ENCODE measurements at regions of chr14 and their contacts with region 1.

Region 1: GRCh38 chr14:51094901-51095853 is at the start of gene TRIM9:
- DNase-seq: peak; percentile 95
- ATAC-seq: peak; percentile 97
- H3K4me3 ChIP-seq: peak within 1 kb of the TSS; percentile 58 to 83 (median 80)
- H3K4me3 Mint-ChIP-seq: peak within 1 kb of the TSS; percentile 95
- H3K27ac ChIP-seq: no peak within 1 kb of the TSS
- H3K27ac Mint-ChIP-seq: peak within 1 kb of the TSS; percentile 75
- H3K4me1 ChIP-seq: peaks cover 21 to 24% of the 10 kb centered on the region in 2 donors
- H3K4me1 Mint-ChIP-seq: peaks cover 23% of the 10 kb centered on the region
- H3K27me3 ChIP-seq: peaks cover 0 to 33% (median 16%) of the 10 kb centered on the region in 4 experiments
- H3K27me3 Mint-ChIP-seq: peaks cover 37% of the 10 kb centered on the region
- CTCF ChIP-seq: no peak
- total RNA-seq, gene TRIM9: 0.32 TPM in 2 replicates

Region 2: DNA sequence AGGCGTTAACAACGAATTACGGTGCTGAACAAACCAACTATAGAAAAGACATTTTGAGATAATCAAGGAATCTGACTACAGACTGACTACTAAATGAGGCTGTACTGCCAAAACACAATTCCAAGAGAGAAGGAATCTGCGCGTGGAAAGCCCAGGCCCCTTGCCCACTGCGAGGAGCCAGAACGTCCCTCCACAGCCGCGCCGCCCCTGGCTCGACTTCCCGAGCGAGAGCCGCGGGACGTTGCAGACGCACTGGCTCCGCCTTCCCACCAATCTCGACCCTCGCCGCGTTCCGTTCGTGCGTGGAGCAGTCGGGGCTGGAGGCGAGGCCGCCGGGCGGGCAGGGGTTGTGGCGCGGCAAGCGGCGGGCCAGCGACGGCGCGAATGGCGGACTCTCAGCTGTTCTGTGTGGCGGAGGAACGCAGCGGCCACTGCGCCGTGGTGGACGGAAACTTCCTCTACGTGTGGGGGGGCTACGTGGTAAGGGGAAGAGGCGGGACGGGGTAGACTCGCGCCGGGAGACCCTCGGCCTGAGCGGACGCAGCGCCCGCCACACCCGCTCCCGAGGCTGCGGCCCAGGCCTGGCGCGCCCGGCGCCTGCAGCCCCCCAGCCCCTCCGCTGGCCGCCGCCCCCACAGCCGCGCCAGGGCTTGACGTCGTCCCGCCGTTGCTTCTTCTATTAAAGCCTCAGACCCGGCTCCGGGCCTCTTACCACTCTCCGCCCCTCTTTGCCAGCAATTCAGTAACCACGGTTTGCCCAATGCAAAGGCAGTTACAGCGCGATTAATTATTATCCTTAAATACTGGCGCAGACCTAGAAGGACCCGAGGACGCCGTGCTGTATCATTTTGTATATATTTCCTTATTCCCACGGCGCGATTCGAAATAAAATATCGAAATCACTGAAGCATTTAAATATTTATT is 1402.1 kb before region 1 on chr14 and contains the start of gene KLHDC1:
- CTCF ChIA-PET with region 1: no interaction called
- POLR2A ChIA-PET with region 1: no interaction called
- intact Hi-C with region 1: loop called (anchors 5 kb)
- DNase-seq: peak; percentile 85
- ATAC-seq: peak; percentile 78
- H3K4me3 ChIP-seq: peak within 1 kb of the TSS; percentile 44 to 74 (median 72)
- H3K4me3 Mint-ChIP-seq: peak within 1 kb of the TSS; percentile 92
- H3K27ac ChIP-seq: peak within 1 kb of the TSS; percentile 47 to 83
- H3K27ac Mint-ChIP-seq: peak within 1 kb of the TSS; percentile 87
- H3K4me1 ChIP-seq: peaks cover 9 to 11% of the 10 kb centered on the region in 2 donors
- H3K4me1 Mint-ChIP-seq: peaks cover 23% of the 10 kb centered on the region
- H3K27me3 ChIP-seq: no peaks in the 10 kb centered on the region
- H3K27me3 Mint-ChIP-seq: no peaks in the 10 kb centered on the region
- CTCF ChIP-seq: no peak
- total RNA-seq, gene KLHDC1: 11.7 and 13.7 TPM in 2 replicates

Region 3: DNA sequence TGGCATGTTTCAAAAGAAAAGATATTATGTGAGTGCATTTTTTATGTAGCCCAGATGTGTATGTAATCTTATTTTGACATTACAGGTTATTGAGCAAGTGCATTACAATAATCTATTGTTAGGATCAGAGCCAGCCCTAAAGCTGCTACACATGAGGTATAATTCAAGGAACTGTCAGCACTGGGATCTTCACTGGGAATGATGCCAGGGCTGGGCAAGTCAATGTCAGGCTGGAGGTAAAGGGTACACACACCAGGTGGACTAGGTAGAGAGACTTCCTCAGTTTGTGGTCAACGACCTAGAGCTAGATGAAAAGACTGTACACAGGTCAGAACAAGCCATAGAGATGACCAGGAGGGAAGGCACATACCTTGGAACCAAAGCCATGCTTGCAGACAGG is 15.7 kb before region 1 on chr14:
- CTCF ChIA-PET with region 1: no interaction called
- POLR2A ChIA-PET with region 1: no interaction called
- intact Hi-C with region 1: no loop called
- DNase-seq: no peak
- ATAC-seq: no peak
- H3K4me3 ChIP-seq: no peak overlapping the region
- H3K4me3 Mint-ChIP-seq: no peak overlapping the region
- H3K27ac ChIP-seq: no peak overlapping the region
- H3K27ac Mint-ChIP-seq: no peak overlapping the region
- H3K4me1 ChIP-seq: no peaks in the 10 kb centered on the region
- H3K4me1 Mint-ChIP-seq: no peaks in the 10 kb centered on the region
- H3K27me3 ChIP-seq: peaks cover 0 to 4% (median 2%) of the 10 kb centered on the region in 4 experiments
- H3K27me3 Mint-ChIP-seq: peaks cover 16% of the 10 kb centered on the region
- CTCF ChIP-seq: no peak

Region 4: DNA sequence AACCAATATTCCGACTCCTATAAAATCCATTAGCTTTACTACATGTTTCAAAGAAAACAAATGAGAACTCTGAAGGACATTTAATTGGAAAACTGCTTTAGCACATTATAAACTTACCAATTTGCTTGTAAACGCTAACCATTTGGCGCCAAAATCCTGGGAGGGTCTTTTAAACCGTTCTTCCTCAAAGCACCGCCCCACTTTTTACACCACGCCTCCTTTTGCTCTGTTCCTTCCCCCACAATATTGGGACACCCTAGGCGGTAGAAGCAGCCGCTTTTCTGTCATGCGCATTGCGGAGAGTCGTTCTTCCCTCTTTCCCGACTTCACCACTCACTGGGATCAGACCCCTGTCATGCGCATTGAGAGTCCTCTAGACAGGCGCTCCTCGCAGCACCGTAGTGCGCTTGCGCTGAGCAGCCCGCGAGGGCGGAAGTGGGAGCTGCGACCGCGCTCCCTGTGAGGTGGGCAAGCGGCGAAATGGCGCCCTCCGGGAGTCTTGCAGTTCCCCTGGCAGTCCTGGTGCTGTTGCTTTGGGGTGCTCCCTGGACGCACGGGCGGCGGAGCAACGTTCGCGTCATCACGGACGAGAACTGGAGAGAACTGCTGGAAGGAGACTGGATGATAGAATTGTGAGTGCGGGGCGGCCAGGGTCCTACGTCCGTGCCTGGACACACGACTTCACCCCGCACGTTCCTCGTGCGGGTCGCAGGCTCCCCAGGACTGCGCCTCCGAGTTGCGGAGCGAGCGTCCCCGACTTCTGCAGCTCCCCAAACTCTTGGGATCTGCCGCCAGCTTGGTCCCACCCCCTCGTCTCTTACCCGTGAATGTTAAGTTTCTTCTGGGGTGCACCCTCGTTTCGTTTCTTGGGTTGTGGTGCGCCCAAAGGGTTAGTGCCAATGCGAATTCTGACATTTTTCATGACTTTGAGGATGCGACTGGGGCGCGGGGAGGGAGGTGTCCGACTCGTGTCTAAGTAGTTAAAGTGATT is 144.9 kb after region 1 on chr14 and contains the start of gene TMX1:
- CTCF ChIA-PET with region 1: interaction called, 5 read pairs
- POLR2A ChIA-PET with region 1: no interaction called
- intact Hi-C with region 1: loop called (anchors 10 kb)
- DNase-seq: peak; percentile 91
- ATAC-seq: peak; percentile 91
- H3K4me3 ChIP-seq: peak within 1 kb of the TSS; percentile 77 to 98 (median 90)
- H3K4me3 Mint-ChIP-seq: no peak within 1 kb of the TSS
- H3K27ac ChIP-seq: peak within 1 kb of the TSS; percentile 74 to 85
- H3K27ac Mint-ChIP-seq: no peak within 1 kb of the TSS
- H3K4me1 ChIP-seq: peaks cover 16 to 25% of the 10 kb centered on the region in 2 donors
- H3K4me1 Mint-ChIP-seq: peaks cover 28% of the 10 kb centered on the region
- H3K27me3 ChIP-seq: no peaks in the 10 kb centered on the region
- H3K27me3 Mint-ChIP-seq: no peaks in the 10 kb centered on the region
- CTCF ChIP-seq: no peak
- total RNA-seq, gene TMX1: 26.4 and 28.6 TPM in 2 replicates

Region 5: DNA sequence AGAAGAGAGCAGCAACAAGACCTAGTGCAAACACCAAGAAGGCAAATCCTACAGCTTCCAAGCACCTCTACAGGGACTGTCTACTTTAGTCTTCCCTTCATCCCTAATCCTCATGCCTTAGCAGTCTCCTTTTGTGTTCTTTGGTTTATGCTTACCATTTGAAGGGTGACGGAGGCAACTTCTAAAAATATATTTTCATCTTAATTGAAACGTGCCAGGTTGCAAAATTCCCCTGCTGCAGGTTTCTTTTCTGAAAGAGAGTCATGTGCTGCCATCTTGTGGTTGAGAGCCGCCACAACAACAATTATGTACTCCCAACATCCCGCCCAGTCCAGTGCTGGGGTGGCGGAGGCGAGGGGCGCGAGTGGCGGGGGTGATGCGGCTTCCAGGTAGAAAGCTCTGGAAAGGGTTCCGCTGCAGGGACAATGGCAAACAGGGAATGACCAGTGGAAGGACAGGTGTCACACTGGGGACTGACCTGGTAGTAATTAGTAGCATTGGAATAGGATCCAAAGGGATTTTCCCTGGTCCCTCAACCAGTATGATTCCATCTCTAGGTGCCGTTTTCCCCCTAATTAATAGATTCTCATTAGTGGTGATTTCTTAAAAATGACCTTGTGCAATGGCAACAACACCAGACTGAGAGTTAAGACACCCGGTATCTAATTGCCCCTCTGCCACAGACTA is 685.0 kb after region 1 on chr14:
- CTCF ChIA-PET with region 1: no interaction called
- POLR2A ChIA-PET with region 1: no interaction called
- intact Hi-C with region 1: loop called (anchors 10 kb)
- DNase-seq: peak; percentile 80
- ATAC-seq: peak; percentile 80
- H3K4me3 ChIP-seq: no peak overlapping the region
- H3K4me3 Mint-ChIP-seq: no peak overlapping the region
- H3K27ac ChIP-seq: no peak overlapping the region
- H3K27ac Mint-ChIP-seq: no peak overlapping the region
- H3K4me1 ChIP-seq: peaks cover 7 to 11% of the 10 kb centered on the region in 2 donors
- H3K4me1 Mint-ChIP-seq: peaks cover 10% of the 10 kb centered on the region
- H3K27me3 ChIP-seq: peaks cover 0 to 16% (median 4%) of the 10 kb centered on the region in 4 experiments
- H3K27me3 Mint-ChIP-seq: peaks cover 32% of the 10 kb centered on the region
- CTCF ChIP-seq: peak; percentile 90

Region 6: GRCh38 chr14:52695481-52696091 is 1600.4 kb after region 1 on chr14 and contains the start of gene ERO1A:
- CTCF ChIA-PET with region 1: no interaction called
- POLR2A ChIA-PET with region 1: no interaction called
- intact Hi-C with region 1: loop called (anchors 10 kb)
- DNase-seq: peak; percentile 79
- ATAC-seq: peak; percentile 77
- H3K4me3 ChIP-seq: peak within 1 kb of the TSS; percentile 86 to 94 (median 89)
- H3K4me3 Mint-ChIP-seq: peak within 1 kb of the TSS; percentile 96
- H3K27ac ChIP-seq: peak within 1 kb of the TSS; percentile 70 to 87
- H3K27ac Mint-ChIP-seq: peak within 1 kb of the TSS; percentile 93
- H3K4me1 ChIP-seq: peaks cover 5 to 7% of the 10 kb centered on the region in 2 donors
- H3K4me1 Mint-ChIP-seq: peaks cover 26% of the 10 kb centered on the region
- H3K27me3 ChIP-seq: no peaks in the 10 kb centered on the region
- H3K27me3 Mint-ChIP-seq: no peaks in the 10 kb centered on the region
- CTCF ChIP-seq: no peak
- total RNA-seq, gene ERO1A: 29.7 and 32.8 TPM in 2 replicates